GM12878 (cell line): ENCODE measurements at regions of chr7 and their contacts with region 1.

Region 1: DNA sequence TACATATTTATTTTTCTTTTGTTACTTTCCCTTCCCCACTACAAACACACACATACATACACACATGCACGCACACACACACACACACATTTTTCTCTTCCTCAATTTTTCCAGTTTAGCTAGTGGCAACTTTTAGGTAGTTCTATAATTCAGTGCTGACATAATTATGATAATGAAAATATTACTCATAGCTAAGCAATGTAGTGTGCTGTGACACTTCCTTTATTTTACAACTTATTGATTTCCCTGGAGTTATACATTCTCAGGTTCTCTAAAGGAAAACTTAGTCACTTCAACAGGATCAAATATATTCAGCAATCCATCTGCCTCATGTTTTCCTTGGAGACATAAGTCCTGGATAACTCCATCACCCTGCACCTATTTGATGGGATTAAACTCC is 151.6 kb downstream of the CACNA2D1 start:
- DNase-seq: no peak
- ATAC-seq: peak; percentile 67
- H3K4me3 ChIP-seq: no peak overlapping the region
- H3K27ac ChIP-seq: no peak overlapping the region
- H3K4me1 ChIP-seq: no peaks in the 10 kb centered on the region
- H3K27me3 ChIP-seq: no peaks in the 10 kb centered on the region
- CTCF ChIP-seq: no peak
- EP300 ChIP-seq: no peak
- POLR2A ChIP-seq: no peak
- RAD21 ChIP-seq: no peak

Region 2: DNA sequence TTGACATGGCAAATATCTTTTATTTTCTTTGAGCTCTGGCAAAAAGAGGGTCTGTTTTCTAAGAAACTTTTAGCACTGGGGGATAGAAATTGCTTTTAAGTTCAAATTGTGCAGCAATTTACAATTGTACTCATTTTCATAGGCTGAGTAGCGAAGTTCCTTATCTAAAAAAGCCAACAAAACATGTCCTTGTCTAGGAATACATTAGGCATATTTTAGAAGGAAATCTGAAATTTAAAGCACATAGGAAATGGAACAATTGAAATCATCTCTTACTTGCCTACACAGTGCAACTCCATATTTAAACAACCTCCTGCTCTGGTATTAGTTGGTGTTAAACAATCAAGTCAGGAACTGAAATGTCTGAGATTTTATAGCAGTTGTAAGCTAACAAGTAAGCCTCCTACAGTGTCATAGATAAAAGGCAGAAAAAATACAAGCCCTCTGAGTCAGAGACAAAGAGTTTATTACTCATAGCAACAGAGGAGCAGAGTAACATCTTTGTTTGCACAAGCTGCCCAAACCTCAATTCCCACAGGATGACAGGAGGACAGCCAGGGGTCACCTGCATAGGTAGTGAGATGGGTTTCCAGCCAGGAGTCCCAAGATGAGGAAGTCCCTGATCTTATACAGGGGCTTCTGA is 241.9 kb before region 1 on chr7:
- CTCF ChIA-PET with region 1: no interaction called
- POLR2A ChIA-PET with region 1: no interaction called
- RAD21 ChIA-PET with region 1: no interaction called
- SMC1A ChIA-PET with region 1: no interaction called
- in situ Hi-C with region 1: no loop called
- intact Hi-C with region 1: loop called (anchors 10 kb)
- DNase-seq: no peak
- ATAC-seq: peak; percentile 70
- H3K4me3 ChIP-seq: no peak overlapping the region
- H3K27ac ChIP-seq: no peak overlapping the region
- H3K4me1 ChIP-seq: no peaks in the 10 kb centered on the region
- H3K27me3 ChIP-seq: no peaks in the 10 kb centered on the region
- CTCF ChIP-seq: no peak
- EP300 ChIP-seq: peak in 1 of 2 experiments; percentile 8; a peak in 1 of 4 replicates
- POLR2A ChIP-seq: no peak
- RAD21 ChIP-seq: no peak

Region 3: DNA sequence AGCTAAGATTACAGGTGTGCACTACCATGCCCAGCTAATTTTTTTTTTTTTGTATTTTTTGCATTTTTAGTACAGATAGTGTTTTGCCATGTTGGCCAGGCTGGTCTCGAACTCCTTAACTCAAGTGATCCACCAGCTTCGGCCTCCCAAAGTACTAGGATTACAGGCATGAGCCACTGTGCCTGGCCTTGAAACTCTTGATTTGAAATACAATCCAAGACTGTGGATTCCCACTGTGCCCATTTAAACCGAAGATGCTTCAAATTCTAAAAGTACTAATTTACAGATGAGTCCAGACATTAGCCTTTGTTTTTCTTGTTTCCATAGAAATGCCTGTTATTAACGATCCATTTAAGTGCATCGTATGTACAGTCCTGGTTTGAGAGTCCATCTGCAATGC is 20.7 kb after region 1 on chr7:
- CTCF ChIA-PET with region 1: interaction called, 6 read pairs
- POLR2A ChIA-PET with region 1: interaction called, 5 read pairs
- RAD21 ChIA-PET with region 1: interaction called, 3 read pairs
- SMC1A ChIA-PET with region 1: interaction called, 11 read pairs
- in situ Hi-C with region 1: no loop called
- intact Hi-C with region 1: no loop called
- DNase-seq: no peak
- ATAC-seq: no peak
- H3K4me3 ChIP-seq: no peak overlapping the region
- H3K27ac ChIP-seq: no peak overlapping the region
- H3K4me1 ChIP-seq: no peaks in the 10 kb centered on the region
- H3K27me3 ChIP-seq: no peaks in the 10 kb centered on the region
- CTCF ChIP-seq: no peak
- EP300 ChIP-seq: no peak
- POLR2A ChIP-seq: no peak
- RAD21 ChIP-seq: no peak